ENCODE measurements at regions of chr11 and their contacts with region 1.

Region 1: GRCh38 chr11:113305440-113306336 is 8.7 kb upstream of the TTC12 start:
- DNase-seq: peak; percentile 82
- H3K4me3 ChIP-seq: no peak overlapping the region
- H3K27ac ChIP-seq: no peak overlapping the region
- H3K4me1 ChIP-seq: no peaks in the 10 kb centered on the region
- H3K27me3 ChIP-seq: no peaks in the 10 kb centered on the region
- CTCF ChIP-seq: peak; percentile 99

Region 2: GRCh38 chr11:113532697-113533424 is 227.2 kb after region 1 on chr11:
- CTCF ChIA-PET with region 1: no interaction called
- POLR2A ChIA-PET with region 1: no interaction called
- intact Hi-C with region 1: loop called (anchors 1 kb)
- DNase-seq: peak; percentile 83
- H3K4me3 ChIP-seq: no peak overlapping the region
- H3K27ac ChIP-seq: no peak overlapping the region
- H3K4me1 ChIP-seq: no peaks in the 10 kb centered on the region
- H3K27me3 ChIP-seq: no peaks in the 10 kb centered on the region
- CTCF ChIP-seq: peak; percentile 97

Region 3: DNA sequence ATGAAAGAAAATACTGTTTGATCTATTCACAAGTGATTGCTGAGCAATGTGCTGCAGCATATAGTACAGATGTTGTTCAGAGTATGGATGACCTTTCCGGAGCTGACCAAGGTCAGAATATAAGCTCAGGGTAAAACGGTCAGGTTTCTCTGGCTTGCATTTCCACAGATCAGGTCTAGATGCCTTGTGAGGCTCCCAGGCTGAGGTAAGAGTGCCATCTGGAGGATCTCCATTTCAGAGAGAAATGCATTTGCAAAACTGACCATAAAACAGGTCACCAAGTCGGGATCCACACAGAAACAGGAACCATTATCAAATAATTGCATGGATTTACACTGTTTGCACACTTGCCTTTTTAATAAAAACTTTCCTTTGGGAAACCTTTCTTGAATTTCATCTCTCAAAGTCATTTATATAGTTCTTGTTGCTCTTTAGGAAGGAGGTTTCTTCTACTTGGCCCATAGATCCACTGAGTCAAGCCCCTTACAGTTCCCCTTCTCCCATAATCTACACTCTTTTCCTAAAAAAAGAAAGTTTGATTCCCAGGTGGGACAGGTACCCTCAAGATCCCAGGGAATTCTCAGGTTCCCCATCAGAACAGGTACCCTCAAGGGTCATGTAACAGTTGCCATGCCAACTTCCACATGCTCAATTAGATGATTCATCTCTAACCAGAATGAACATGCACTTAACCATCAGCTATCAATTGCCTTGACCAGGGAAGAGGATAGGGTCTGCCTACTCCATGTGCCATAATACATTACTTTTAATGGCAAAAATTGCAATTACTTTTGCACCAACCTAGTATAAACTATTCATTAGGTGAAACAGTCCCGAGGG is 425.4 kb after region 1 on chr11:
- CTCF ChIA-PET with region 1: no interaction called
- POLR2A ChIA-PET with region 1: no interaction called
- intact Hi-C with region 1: loop called (anchors 1 kb)
- DNase-seq: peak; percentile 54
- H3K4me3 ChIP-seq: no peak overlapping the region
- H3K27ac ChIP-seq: no peak overlapping the region
- H3K4me1 ChIP-seq: no peaks in the 10 kb centered on the region
- H3K27me3 ChIP-seq: no peaks in the 10 kb centered on the region
- CTCF ChIP-seq: peak; percentile 60

Region 4: DNA sequence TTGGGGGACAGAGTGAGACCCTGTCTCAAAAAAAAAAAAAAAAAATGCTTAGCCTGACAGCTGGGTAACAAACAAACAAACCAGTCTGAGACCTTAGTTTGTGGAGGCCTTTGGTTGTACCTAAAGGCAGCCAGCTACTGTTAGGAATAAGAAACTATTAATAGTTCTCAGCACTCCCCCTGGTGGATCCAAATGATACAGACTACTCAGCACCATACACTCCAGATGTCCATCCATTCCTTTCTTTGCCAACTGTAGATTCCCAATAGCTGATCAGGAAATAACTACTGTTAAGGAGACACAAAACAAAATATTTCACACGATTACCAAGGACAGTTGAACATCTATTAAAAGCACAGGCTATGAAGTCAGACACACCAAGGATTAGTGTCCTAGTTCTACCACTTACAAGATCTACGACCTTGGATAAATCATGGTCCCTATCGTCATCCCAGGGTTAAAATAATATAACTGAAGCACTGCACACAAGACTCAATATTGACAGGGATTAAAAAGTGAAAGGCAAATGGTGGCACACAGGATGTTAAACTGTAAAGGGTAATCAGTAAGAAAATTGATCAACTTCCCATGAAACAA is 491.1 kb after region 1 on chr11:
- CTCF ChIA-PET with region 1: no interaction called
- POLR2A ChIA-PET with region 1: no interaction called
- intact Hi-C with region 1: loop called (anchors 2 kb)
- DNase-seq: peak; percentile 71
- H3K4me3 ChIP-seq: no peak overlapping the region
- H3K27ac ChIP-seq: no peak overlapping the region
- H3K4me1 ChIP-seq: no peaks in the 10 kb centered on the region
- H3K27me3 ChIP-seq: no peaks in the 10 kb centered on the region
- CTCF ChIP-seq: peak; percentile 81

Measured in A673 (cell line).